Activated CD4-positive, alpha-beta T cell treated with anti-CD3 and anti-CD28 coated beads for 36 hours (primary cell): ENCODE measurements at regions of chr17 and their contacts with region 1.

Region 1: DNA sequence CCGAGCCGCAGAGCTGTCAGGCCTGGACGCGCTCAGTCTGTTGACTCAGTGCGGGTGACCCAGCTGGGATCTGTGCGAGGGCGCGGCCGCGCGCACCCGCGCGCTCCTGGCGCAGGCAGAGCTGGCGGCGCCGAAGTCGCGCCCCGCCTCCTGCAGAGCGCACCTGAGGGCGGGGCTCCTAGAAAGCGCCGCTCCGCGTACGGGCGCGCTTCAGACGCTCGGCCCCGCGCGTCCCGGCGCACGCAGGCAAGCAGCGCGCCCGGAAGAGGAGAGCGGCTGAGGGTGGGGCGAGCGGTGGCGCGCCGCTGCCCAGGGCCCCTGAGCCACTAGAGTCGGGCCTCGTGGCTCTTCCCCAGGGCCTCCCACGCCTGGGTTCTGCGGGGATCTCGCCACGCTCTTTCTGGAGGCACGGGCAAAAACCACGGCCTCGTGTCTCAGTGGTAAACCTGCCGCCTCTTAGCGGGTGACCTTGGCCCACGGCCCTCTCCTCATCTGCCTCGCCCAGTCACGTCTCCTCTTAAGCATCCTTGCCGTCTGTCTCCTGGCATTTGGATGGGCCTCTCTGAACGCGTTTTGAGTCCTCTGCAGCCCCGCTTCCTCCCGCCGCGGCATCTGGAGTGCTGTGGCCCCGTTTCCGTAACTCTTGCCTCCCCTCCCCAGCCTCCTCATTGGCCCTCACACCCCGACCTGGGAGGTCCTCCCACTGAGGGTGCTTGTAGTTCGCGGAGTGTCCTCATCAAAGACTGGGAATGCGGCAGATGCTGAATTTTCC is at the start of gene ABCA5:
- DNase-seq: peak; percentile 92
- ATAC-seq: peak; percentile 98
- H3K4me3 Mint-ChIP-seq: peak within 1 kb of the TSS; percentile 95
- H3K27ac Mint-ChIP-seq: peak within 1 kb of the TSS; percentile 97
- H3K4me1 Mint-ChIP-seq: peaks cover 43% of the 10 kb centered on the region
- H3K27me3 Mint-ChIP-seq: peaks cover 2% of the 10 kb centered on the region
- total RNA-seq, gene ABCA5: 14.4 to 15.1 TPM

Region 2: GRCh38 chr17:67993596-67994361 is 1333.5 kb before region 1 on chr17:
- CTCF ChIA-PET with region 1: no interaction called
- POLR2A ChIA-PET with region 1: no interaction called
- intact Hi-C with region 1: loop called in 1 of 2 experiments (anchors 2 kb)
- DNase-seq: peak; percentile 84
- ATAC-seq: peak; percentile 57
- H3K4me3 Mint-ChIP-seq: peak overlapping the region; percentile 75
- H3K27ac Mint-ChIP-seq: peak overlapping the region; percentile 84
- H3K4me1 Mint-ChIP-seq: peaks cover 26% of the 10 kb centered on the region
- H3K27me3 Mint-ChIP-seq: peaks cover 13% of the 10 kb centered on the region

Region 3: DNA sequence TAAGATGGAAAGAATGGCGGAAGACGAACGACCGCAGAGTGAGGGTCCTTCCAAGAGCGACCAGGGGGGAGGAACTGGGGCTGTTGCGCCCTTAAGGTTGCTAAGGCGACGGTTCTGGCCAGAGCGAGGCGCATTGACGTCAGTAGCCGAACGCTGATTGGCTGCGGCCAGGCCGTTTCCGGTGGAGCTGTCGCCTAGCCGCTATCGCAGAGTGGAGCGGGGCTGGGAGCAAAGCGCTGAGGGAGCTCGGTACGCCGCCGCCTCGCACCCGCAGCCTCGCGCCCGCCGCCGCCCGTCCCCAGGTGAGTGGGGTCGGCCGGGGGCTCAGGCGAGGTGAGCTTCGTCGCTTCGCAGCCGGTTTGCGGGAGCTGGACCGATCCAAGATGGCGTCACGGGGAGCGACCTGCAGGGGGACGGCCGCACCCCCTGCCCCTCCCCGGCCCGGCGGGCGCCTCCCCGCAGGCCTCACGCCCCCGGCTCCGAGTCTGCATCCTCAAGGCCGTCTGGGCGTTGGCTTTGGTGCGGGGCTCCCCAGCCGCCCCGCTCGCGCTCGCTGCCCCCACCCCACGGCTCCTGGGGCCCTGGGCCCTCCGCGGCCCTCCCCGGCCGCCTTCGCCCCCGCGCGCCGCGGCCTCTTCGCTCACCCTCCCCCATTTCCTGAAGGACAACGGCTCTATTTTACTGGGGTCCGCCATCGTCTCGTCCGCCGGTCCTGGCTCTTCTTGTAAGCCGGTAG is 814.8 kb before region 1 on chr17 and contains the start of gene PRKAR1A:
- CTCF ChIA-PET with region 1: no interaction called
- POLR2A ChIA-PET with region 1: no interaction called
- intact Hi-C with region 1: loop called (anchors 2 to 5 kb)
- DNase-seq: peak; percentile 95
- ATAC-seq: peak; percentile 92
- H3K4me3 Mint-ChIP-seq: peak within 1 kb of the TSS; percentile 93
- H3K27ac Mint-ChIP-seq: peak within 1 kb of the TSS; percentile 97
- H3K4me1 Mint-ChIP-seq: peaks cover 42% of the 10 kb centered on the region
- H3K27me3 Mint-ChIP-seq: no peaks in the 10 kb centered on the region
- total RNA-seq, gene PRKAR1A: 165 to 167 TPM

Region 4: GRCh38 chr17:69414408-69415274 is 87.4 kb after region 1 on chr17 and contains the start of gene MAP2K6:
- CTCF ChIA-PET with region 1: no interaction called
- POLR2A ChIA-PET with region 1: interaction called, 4 read pairs
- intact Hi-C with region 1: loop called (anchors 1 to 2 kb)
- DNase-seq: peak; percentile 91
- ATAC-seq: peak; percentile 99
- H3K4me3 Mint-ChIP-seq: no peak within 1 kb of the TSS
- H3K27ac Mint-ChIP-seq: no peak within 1 kb of the TSS
- H3K4me1 Mint-ChIP-seq: peaks cover 10% of the 10 kb centered on the region
- H3K27me3 Mint-ChIP-seq: no peaks in the 10 kb centered on the region
- total RNA-seq, gene MAP2K6: 2.7 to 3.4 TPM

Region 5: GRCh38 chr17:69501591-69502468 is 174.6 kb after region 1 on chr17:
- CTCF ChIA-PET with region 1: no interaction called
- POLR2A ChIA-PET with region 1: no interaction called
- intact Hi-C with region 1: loop called in 1 of 2 experiments (anchors 10 kb)
- DNase-seq: peak; percentile 25
- ATAC-seq: peak; percentile 55
- H3K4me3 Mint-ChIP-seq: peak overlapping the region; percentile 16
- H3K27ac Mint-ChIP-seq: peak overlapping the region; percentile 74
- H3K4me1 Mint-ChIP-seq: peaks cover 23% of the 10 kb centered on the region
- H3K27me3 Mint-ChIP-seq: no peaks in the 10 kb centered on the region

Region 6: GRCh38 chr17:70137451-70138230 is 810.4 kb after region 1 on chr17:
- CTCF ChIA-PET with region 1: no interaction called
- POLR2A ChIA-PET with region 1: no interaction called
- intact Hi-C with region 1: loop called in 1 of 2 experiments (anchors 1 kb)
- DNase-seq: peak; percentile 59
- ATAC-seq: peak; percentile 98
- H3K4me3 Mint-ChIP-seq: no peak overlapping the region
- H3K27ac Mint-ChIP-seq: peak overlapping the region; percentile 66
- H3K4me1 Mint-ChIP-seq: peaks cover 21% of the 10 kb centered on the region
- H3K27me3 Mint-ChIP-seq: peaks cover 7% of the 10 kb centered on the region